ENCODE measurements at regions of chr1 and their contacts with region 1.

Region 1: DNA sequence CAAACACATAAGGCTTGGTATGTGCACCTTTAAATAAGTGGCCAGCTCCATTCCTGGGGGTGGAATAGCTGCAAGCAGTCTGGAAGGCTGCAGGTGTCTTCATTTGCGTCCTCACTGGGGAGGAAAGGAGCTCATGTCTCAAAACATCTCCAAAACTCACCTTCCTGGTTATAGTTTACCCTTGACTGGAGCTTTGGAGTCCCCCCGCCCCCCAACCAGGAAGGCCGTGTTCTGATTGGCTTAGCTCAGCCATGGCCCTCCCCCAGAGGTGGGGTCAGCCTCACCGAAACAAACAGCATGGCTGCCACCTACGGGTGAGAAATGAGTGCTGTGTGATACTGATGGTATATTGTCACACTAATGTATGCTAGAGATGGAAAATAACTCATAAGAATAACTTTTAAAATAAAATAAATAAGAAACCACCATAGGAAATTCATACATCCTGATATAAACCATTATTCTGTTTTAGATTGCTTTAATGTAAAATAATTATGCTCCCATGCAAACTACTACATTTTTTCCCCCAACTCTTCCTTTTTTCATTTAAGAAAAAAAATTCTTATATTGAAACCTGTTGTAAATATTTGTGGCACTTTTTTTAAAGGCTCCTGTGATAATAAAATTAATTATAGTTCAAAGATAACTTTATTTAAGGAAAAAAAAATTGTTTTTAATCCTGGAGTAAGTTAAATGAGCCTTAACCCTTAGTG is 90.8 kb downstream of the ZP4 start:
- DNase-seq: peak; percentile 76
- H3K4me3 ChIP-seq: no peak overlapping the region
- H3K27ac ChIP-seq: no peak overlapping the region
- H3K4me1 ChIP-seq: no peaks in the 10 kb centered on the region
- H3K27me3 ChIP-seq: no peaks in the 10 kb centered on the region
- CTCF ChIP-seq: peak; percentile 65

Region 2: GRCh38 chr1:237677979-237678378 is 121.9 kb before region 1 on chr1:
- CTCF ChIA-PET with region 1: no interaction called
- POLR2A ChIA-PET with region 1: no interaction called
- intact Hi-C with region 1: loop called (anchors 5 kb)
- DNase-seq: peak; percentile 3
- H3K4me3 ChIP-seq: no peak overlapping the region
- H3K27ac ChIP-seq: no peak overlapping the region
- H3K4me1 ChIP-seq: no peaks in the 10 kb centered on the region
- H3K27me3 ChIP-seq: no peaks in the 10 kb centered on the region
- CTCF ChIP-seq: peak; percentile 37

Region 3: DNA sequence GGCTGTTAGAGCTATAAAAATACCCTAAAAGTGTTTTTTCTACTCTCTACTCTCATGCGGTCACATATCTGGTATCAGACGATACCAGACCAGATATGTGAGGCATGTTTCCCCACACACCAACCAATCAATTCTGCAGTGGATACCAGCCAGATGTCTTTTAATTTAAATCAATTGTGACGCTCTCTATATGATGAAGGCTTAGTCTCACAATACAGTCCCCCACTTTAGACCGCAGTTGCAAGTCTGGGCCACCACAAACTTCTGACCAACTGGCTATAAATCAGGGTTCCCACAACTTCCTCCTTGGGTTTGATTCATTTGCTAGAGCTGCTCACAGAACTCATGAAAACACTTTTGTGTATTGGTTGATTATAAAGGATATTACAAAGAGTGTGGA is 676.9 kb after region 1 on chr1:
- CTCF ChIA-PET with region 1: no interaction called
- POLR2A ChIA-PET with region 1: no interaction called
- intact Hi-C with region 1: no loop called
- DNase-seq: no peak
- H3K4me3 ChIP-seq: no peak overlapping the region
- H3K27ac ChIP-seq: no peak overlapping the region
- H3K4me1 ChIP-seq: no peaks in the 10 kb centered on the region
- H3K27me3 ChIP-seq: no peaks in the 10 kb centered on the region
- CTCF ChIP-seq: no peak

Measured in A673 (cell line).